PC-9 (cell line): ENCODE measurements at regions of chr14 and their contacts with region 1.

Region 1: DNA sequence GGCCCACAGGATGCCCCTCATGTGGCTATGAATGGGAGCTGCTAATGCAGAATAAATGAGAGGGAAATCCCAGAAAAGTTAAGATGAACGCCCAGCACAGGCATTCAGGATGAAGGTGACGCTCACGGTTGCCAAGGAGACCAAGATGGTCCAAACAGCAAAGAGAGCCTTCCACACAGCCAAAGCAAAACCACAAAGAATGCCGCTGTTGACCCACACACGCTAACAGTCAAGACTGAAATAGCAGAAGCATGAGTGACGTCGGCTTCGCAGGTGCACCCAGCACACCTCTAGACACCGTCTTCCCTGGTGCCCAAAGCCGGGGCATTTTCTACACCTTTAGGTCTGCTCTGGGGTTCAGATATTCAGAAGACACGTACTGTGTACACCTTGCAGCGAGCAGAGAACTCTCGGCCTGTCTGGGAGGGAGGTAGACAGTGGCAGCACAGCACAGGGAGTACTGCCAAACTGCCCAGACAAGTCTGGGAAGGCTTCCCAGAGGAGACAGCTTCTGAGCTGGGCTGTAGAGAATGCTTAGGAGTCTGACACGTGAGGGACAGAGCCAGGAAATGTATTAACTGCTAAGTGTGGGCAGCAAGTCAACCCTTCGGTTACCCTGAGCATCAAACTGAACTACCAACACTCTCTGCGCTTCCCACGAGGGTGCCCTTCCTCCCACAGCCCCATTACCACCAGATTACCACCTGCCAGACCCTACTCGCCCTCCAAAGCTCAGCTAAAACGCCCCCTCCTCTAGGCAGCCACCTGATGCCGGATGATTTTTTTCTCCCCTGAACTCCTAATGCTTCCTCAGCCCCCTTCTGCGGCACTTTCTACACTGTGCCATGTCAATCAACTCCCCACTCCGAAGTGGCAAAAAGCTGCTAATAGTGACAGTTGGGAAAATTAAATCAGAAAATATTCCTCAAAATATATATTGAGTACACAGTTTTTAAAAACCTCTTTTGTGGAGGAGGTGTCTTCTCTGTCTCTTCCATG is 50.1 kb downstream of the CCDC88C start:
- DNase-seq: peak; percentile 67 to 96
- H3K4me3 ChIP-seq: peak overlapping the region; percentile 41; the same call in 1 of the 2 replicates
- H3K27ac ChIP-seq: peak overlapping the region; percentile 84
- H3K4me1 ChIP-seq: peaks cover 30% of the 10 kb centered on the region
- H3K27me3 ChIP-seq: no peaks in the 10 kb centered on the region
- CTCF ChIP-seq: no peak

Region 2: DNA sequence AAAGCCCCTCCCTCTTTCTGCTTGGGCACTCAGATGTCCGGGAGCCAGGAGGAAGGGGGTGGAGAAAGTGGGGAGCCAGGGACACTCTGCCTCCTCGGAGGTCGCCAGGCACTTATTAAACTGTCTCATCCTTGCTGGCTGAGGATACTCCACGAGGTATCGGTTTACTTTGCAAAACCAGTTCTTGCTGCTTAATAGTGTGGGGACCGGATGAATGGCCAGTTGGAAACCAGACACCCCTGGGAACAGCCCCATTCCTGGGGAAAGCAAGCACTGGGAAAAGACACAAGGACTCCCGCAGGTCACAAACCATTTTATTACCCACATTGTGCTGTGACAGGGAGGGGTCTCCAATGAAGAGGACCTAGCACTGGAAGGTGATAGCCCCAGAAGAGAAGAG is 16.0 kb after region 1 on chr14:
- CTCF ChIA-PET with region 1: no interaction called
- POLR2A ChIA-PET with region 1: no interaction called
- intact Hi-C with region 1: loop called (anchors 1 kb)
- DNase-seq: peak; percentile 39 to 88
- H3K4me3 ChIP-seq: no peak overlapping the region; the same call in 1 of the 2 replicates
- H3K27ac ChIP-seq: peak overlapping the region; percentile 90
- H3K4me1 ChIP-seq: peaks cover 39% of the 10 kb centered on the region
- H3K27me3 ChIP-seq: no peaks in the 10 kb centered on the region
- CTCF ChIP-seq: no peak